MCF 10A (cell line): ENCODE measurements at regions of chr2 and their contacts with region 1.

Region 1: GRCh38 chr2:100818606-100819369 is 1.2 kb upstream of the NPAS2 start:
- DNase-seq: peak; percentile 51
- H3K4me3 Mint-ChIP-seq: peak overlapping the region; percentile 83
- H3K27ac Mint-ChIP-seq: peak overlapping the region; percentile 51
- H3K4me1 Mint-ChIP-seq: peaks cover 36% of the 10 kb centered on the region
- H3K27me3 Mint-ChIP-seq: no peaks in the 10 kb centered on the region
- CTCF ChIP-seq: peak; percentile 23

Region 2: GRCh38 chr2:100610381-100610831 is 208.4 kb before region 1 on chr2:
- CTCF ChIA-PET with region 1: interaction called, 6 read pairs
- POLR2A ChIA-PET with region 1: interaction called, 3 read pairs
- intact Hi-C with region 1: loop called (anchors 1 kb)
- DNase-seq: peak; percentile 61
- H3K4me3 Mint-ChIP-seq: no peak overlapping the region
- H3K27ac Mint-ChIP-seq: no peak overlapping the region
- H3K4me1 Mint-ChIP-seq: peaks cover 5% of the 10 kb centered on the region
- H3K27me3 Mint-ChIP-seq: peaks cover 13% of the 10 kb centered on the region
- CTCF ChIP-seq: peak; percentile 67

Region 3: GRCh38 chr2:100786297-100786658 is 32.5 kb before region 1 on chr2:
- CTCF ChIA-PET with region 1: interaction called, 3 read pairs
- POLR2A ChIA-PET with region 1: interaction called, 11 read pairs
- intact Hi-C with region 1: no loop called
- DNase-seq: peak; percentile 91
- H3K4me3 Mint-ChIP-seq: peak overlapping the region; percentile 56
- H3K27ac Mint-ChIP-seq: peak overlapping the region; percentile 21
- H3K4me1 Mint-ChIP-seq: peaks cover 29% of the 10 kb centered on the region
- H3K27me3 Mint-ChIP-seq: no peaks in the 10 kb centered on the region
- CTCF ChIP-seq: no peak

Region 4: GRCh38 chr2:100840519-100840918 is 21.7 kb after region 1 on chr2:
- CTCF ChIA-PET with region 1: no interaction called
- POLR2A ChIA-PET with region 1: no interaction called
- intact Hi-C with region 1: no loop called
- DNase-seq: no peak
- H3K4me3 Mint-ChIP-seq: no peak overlapping the region
- H3K27ac Mint-ChIP-seq: no peak overlapping the region
- H3K4me1 Mint-ChIP-seq: no peaks in the 10 kb centered on the region
- H3K27me3 Mint-ChIP-seq: no peaks in the 10 kb centered on the region
- CTCF ChIP-seq: no peak

Region 5: GRCh38 chr2:100902833-100903405 is 84.1 kb after region 1 on chr2:
- CTCF ChIA-PET with region 1: no interaction called
- POLR2A ChIA-PET with region 1: interaction called, 3 read pairs
- intact Hi-C with region 1: loop called (anchors 5 kb)
- DNase-seq: peak; percentile 90
- H3K4me3 Mint-ChIP-seq: no peak overlapping the region
- H3K27ac Mint-ChIP-seq: no peak overlapping the region
- H3K4me1 Mint-ChIP-seq: peaks cover 28% of the 10 kb centered on the region
- H3K27me3 Mint-ChIP-seq: no peaks in the 10 kb centered on the region
- CTCF ChIP-seq: no peak

Region 6: DNA sequence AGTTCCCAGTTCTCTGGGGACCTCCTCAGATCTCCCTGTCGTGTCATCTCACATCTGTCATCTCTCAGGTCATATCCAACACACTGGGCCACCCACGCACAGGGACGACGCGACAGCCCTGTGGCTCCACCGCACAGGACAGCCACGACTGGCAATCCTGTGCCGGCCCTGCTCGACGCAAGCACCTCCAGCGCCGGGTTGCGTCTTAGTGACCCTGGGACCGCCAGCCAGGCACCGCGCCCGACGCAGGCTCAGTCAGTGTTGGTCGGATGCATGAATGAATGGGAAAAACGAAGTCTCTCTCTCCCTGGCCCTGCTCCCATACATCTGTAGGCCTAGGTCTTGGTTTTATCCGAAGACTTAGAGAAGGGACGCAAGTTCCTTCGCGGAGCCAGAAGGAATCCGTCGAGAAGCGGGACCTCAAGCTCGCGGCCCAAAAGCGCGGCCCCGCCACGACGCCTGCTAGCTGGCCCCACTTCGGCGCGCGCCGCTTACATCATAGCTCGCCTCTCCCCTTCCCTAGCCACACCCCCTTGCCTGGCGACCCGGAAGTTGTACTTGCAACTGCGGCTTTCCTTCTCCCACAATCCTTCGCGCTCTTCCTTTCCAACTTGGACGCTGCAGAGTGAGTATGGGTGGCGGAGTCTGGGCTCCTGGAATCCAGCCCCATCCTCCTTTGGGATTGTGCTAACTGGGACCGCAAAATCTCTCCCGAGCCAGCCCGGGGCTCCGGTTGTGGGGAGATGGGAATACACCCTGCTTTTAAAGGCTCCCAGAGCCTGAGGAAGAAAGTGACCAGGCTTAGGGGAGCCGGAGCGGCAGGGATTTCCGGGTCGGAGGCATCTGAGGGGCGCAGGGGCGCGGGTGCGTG is 183.1 kb after region 1 on chr2 and contains the start of gene RPL31:
- CTCF ChIA-PET with region 1: no interaction called
- POLR2A ChIA-PET with region 1: interaction called, 12 read pairs
- intact Hi-C with region 1: no loop called
- DNase-seq: peak; percentile 98
- H3K4me3 Mint-ChIP-seq: peak within 1 kb of the TSS; percentile 92
- H3K27ac Mint-ChIP-seq: peak within 1 kb of the TSS; percentile 99
- H3K4me1 Mint-ChIP-seq: peaks cover 19% of the 10 kb centered on the region
- H3K27me3 Mint-ChIP-seq: no peaks in the 10 kb centered on the region
- CTCF ChIP-seq: no peak
- total RNA-seq, gene RPL31: 1,648 and 1,732 TPM in 2 replicates

Region 7: DNA sequence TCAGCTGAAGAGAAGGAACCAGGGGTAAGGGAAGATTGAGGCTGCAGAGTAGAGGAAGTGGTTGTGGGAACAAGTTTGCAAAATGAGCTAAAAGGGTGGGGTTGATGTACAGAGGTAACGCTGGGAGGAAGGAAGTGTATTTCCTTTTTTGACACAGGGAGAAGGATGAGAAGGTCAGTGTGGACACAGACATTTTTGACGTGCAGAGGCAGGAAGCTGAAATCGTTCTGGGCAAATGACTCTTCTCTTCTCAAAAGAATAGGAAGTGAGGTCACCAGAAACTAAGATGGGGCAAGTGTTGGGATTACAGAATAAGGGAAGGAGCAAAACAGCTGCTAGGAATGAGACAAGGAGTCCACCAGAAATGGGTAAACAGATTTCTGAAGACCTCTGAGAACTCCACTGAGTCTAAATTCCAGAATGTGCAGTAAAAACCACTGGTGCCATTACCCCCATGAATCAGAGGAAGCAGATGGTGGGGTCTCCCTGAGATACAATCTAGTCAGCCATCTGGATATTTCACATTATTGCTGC is 509.8 kb after region 1 on chr2:
- CTCF ChIA-PET with region 1: no interaction called
- POLR2A ChIA-PET with region 1: no interaction called
- intact Hi-C with region 1: no loop called
- DNase-seq: peak; percentile 16
- H3K4me3 Mint-ChIP-seq: no peak overlapping the region
- H3K27ac Mint-ChIP-seq: no peak overlapping the region
- H3K4me1 Mint-ChIP-seq: no peaks in the 10 kb centered on the region
- H3K27me3 Mint-ChIP-seq: no peaks in the 10 kb centered on the region
- CTCF ChIP-seq: no peak